ENCODE measurements at regions of chr7 and their contacts with region 1.

Region 1: GRCh38 chr7:30478349-30479201 is at the start of gene NOD1:
- DNase-seq: peak; percentile 88 to 91
- ATAC-seq: peak; percentile 96
- H3K4me3 ChIP-seq: peak within 1 kb of the TSS; percentile 22 to 72
- H3K27ac ChIP-seq: peak within 1 kb of the TSS; percentile 25 to 77
- H3K4me1 ChIP-seq: no peaks in the 10 kb centered on the region
- H3K27me3 ChIP-seq: no peaks in the 10 kb centered on the region
- total RNA-seq, gene NOD1: 18.5 to 38.4 TPM

Region 2: GRCh38 chr7:30433082-30433481 is 45.5 kb before region 1 on chr7:
- intact Hi-C with region 1: no loop called
- DNase-seq: peak; percentile 80 to 84
- ATAC-seq: peak; percentile 86
- H3K4me3 ChIP-seq: no peak overlapping the region
- H3K27ac ChIP-seq: peak overlapping the region in 1 of 2 donors; percentile 67
- H3K4me1 ChIP-seq: peaks cover 2 to 6% of the 10 kb centered on the region in 2 donors
- H3K27me3 ChIP-seq: no peaks in the 10 kb centered on the region

Region 3: GRCh38 chr7:30504347-30505173 is 26.0 kb after region 1 on chr7 and contains the start of gene GGCT:
- intact Hi-C with region 1: loop called in 1 of 2 experiments (anchors 2 kb)
- DNase-seq: peak; percentile 99
- ATAC-seq: peak; percentile 100
- H3K4me3 ChIP-seq: peak within 1 kb of the TSS; percentile 52 to 80
- H3K27ac ChIP-seq: peak within 1 kb of the TSS in 1 of 2 donors; percentile 43
- H3K4me1 ChIP-seq: peaks cover 0 to 2% of the 10 kb centered on the region in 2 donors
- H3K27me3 ChIP-seq: no peaks in the 10 kb centered on the region
- total RNA-seq, gene GGCT: 16.7 to 22.5 TPM

Region 4: DNA sequence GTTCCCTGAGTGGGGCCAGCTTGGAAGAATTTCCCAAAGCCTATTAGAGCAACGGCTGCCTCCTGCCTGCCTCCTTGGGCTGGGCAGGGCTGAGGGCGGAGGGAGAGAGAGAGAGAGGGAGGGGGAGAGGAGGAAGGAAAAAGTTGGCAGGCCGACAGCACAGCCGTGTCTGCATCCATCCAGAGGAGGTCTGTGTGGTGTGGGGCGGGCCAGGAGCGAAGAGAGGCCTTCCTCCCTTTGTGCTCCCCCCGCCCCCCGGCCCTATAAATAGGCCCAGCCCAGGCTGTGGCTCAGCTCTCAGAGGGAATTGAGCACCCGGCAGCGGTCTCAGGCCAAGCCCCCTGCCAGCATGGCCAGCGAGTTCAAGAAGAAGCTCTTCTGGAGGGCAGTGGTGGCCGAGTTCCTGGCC is 433.0 kb after region 1 on chr7 and contains the start of gene AQP1:
- intact Hi-C with region 1: no loop called
- DNase-seq: peak; percentile 97
- ATAC-seq: peak; percentile 82
- H3K4me3 ChIP-seq: peak within 1 kb of the TSS; percentile 67 to 88
- H3K27ac ChIP-seq: peak within 1 kb of the TSS; percentile 61 to 94
- H3K4me1 ChIP-seq: no peaks in the 10 kb centered on the region
- H3K27me3 ChIP-seq: no peaks in the 10 kb centered on the region
- total RNA-seq, gene AQP1: 680 to 1,062 TPM

Measured in aorta (tissue), 5 donors.